Left colon (tissue), 2 donors: ENCODE measurements at regions of chr2 and their contacts with region 1.

Region 1: DNA sequence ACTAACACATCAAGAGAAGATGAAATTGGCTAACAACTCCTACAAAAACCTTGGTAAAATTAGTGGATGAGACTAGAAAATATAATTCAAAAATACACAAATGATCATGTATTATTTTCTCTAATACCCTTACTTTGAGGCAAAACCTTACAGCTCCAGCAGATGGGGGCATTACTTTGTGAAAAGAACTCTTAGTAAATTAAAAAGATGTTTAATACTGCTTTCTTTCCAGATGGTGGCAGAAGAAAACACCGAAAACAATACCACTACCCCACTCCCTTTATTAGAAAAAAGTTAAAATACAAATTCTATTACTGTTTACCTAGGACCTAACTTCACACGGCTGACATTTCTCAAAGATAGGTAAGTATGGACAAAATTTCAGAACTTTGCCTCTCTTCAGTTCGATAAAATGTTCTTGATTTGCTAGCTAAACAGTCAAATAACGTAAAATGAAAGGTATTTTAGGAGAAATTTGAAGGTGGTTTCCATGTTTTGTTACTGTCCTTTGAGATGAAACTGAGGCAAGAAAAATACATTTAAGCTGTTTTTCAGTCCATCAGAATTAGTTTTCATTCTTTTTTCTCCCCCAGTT is 30.6 kb downstream of the ORC4 start:
- DNase-seq: no peak
- ATAC-seq: no peak

Region 2: DNA sequence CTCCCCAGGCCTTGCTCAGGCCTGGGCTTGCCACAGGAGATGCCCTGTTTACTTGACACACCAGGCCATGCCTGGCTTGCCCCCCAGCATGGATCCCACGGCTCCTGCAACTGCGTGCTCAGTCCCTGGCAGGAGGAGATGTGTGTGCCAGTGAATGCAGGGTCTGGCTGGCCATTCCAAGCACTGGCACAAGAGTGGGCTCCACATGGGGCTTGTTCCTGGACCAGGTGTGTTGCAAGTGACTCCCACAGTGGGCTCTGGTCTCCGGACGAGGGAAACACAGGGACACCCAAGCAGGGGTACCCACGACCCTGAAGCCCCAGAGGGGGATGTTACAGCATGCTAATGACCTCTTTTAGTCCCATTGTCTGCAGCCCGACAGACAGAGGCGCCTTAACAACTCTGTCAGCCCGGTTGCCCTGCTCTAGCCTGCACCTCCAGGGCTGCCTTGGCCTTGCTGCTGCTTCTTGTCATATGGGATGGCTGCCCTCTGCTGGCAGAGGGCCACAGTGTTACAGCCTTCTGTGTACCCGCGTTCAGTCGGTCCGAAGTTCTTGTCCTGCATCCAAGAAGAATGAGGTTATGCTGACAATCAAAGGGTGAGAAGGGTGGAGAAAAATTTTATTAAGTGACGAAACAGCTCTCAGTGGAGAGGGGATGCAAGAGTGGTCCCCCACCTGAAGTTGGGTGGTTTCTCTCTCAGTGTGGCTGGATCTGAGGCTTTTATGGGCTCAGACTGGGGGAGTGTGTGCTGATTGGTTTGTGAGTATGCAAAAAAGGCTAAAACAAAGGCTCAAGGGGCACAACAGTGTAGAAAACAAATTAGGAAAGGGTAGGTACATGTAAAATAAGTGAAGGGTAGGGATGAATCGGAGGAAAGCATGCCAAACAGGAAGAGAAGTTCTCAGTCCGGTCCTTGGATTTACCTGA is 211.4 kb after region 1 on chr2:
- intact Hi-C with region 1: loop called in 1 of 2 experiments (anchors 10 kb)
- DNase-seq: peak; percentile 37 to 58
- ATAC-seq: peak; percentile 79

Region 3: GRCh38 chr2:148509288-148509902 is 519.5 kb after region 1 on chr2:
- intact Hi-C with region 1: loop called in 1 of 2 experiments (anchors 10 kb)
- DNase-seq: peak; percentile 71 to 87
- ATAC-seq: peak; percentile 100